ENCODE measurements at regions of chr2 and their contacts with region 1.

Region 1: DNA sequence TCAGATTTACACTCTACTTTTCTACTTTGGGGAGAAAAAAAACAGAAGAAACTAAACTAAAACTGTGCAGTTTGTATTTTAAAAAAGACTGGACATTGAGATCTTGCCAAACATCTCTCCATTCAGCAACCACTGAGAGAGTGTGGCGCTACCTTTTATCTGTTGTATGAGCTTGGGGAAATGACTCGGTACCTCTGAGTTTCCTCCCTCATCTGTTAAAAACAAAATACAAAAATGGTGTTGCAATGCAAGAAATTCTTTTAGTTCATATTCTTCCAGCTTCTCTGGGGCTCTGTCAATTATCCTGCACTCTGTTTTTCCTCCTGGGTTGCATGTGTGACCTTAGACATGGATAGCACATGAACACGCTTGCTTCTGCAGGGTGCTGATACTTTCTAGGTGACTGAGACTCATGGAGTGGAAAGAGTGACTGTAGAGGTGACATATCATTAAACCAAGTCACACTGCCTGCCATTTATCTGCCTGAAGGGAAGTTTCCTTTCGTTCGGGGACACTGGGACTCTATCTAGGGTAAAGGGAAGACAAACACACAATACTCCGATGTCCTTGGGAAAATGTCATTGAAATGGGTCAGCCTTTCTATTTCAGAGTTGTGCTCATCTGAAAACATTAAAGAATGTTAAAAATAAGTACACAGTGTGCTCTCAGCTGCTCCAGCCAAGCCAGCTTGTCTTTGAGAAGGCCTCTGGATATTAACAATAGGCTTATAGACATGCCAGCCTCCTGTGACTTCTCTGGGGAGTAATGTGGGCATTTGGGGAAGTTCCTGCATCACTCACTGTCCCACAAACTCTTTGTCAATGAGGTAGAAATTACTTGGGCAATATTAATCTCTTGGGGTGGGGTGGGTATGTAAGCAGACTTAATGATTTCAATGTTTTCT is 91.4 kb downstream of the TRIB2 start:
- DNase-seq: no peak
- H3K4me3 ChIP-seq: peak overlapping the region in 1 of 59 donors; percentile 8
- H3K27ac ChIP-seq: peak overlapping the region in 33 of 59 donors; percentile 1 to 63 (median 37)
- H3K27me3 ChIP-seq: no peaks in the 10 kb centered on the region
- CTCF ChIP-seq: no peak

Region 2: GRCh38 chr2:12769492-12770105 is 38.6 kb before region 1 on chr2:
- intact Hi-C with region 1: no loop called
- DNase-seq: peak in 8 of 10 donors; percentile 30 to 73 (median 68)
- H3K4me3 ChIP-seq: no peak overlapping the region
- H3K27ac ChIP-seq: no peak overlapping the region
- H3K27me3 ChIP-seq: peaks cover 0 to 13% (median 0%) of the 10 kb centered on the region in 45 donors
- CTCF ChIP-seq: no peak

Region 3: DNA sequence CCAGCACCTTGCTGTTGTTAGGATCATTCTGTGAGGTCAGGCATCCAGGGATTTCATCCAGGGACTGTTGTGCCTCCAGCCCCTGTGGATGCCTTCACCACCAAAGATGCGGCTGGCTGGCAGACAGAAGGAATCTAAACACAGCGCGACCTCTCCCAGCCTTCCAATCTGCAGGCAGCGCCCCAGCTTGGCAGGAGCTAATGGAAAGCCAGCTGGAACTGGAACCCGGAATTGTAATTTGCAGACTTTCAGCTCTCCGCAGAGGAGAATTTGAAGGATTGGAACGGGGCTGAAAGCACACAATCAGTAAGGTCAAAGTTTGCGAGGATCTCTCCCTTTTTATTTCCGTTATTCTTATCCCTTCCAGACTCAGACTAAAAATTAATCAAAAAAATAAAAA is 36.4 kb after region 1 on chr2:
- intact Hi-C with region 1: loop called in 1 of 2 experiments (anchors 5 kb)
- DNase-seq: no peak
- H3K4me3 ChIP-seq: peak overlapping the region in 3 of 59 donors; percentile 6 to 15 (median 12)
- H3K27ac ChIP-seq: peak overlapping the region in 1 of 59 donors; percentile 7
- H3K27me3 ChIP-seq: peaks cover 0 to 8% (median 0%) of the 10 kb centered on the region in 45 donors
- CTCF ChIP-seq: no peak

Region 4: DNA sequence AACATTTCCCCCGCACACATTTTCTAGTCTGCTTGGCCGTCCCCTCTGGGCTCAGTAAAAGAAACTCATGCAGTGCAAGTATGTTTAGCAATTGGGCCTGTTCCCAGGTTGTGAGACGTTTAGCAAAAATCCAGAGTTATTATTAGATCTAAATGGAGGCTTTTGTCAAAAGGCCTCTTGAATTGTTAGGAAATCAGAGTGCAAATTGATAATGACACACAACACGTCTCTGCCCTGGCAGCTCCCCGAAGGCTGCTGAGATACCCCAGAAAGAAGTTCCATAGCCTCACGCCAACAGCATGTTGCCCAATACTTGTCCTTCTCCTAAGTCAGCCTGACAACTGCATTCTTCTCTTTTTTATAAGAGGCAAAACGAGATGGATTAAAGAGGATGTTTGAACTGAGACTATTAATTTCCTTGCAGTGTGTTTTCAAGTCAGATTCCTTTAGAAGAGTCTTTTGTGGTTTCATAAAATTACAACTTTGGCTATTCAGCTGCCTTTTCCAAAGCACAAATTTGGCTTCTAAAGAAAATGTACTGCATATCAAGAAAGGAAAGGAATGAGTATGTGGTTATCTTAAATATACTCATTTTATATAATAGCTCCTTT is 110.8 kb after region 1 on chr2:
- intact Hi-C with region 1: no loop called
- DNase-seq: no peak
- H3K4me3 ChIP-seq: no peak overlapping the region
- H3K27ac ChIP-seq: peak overlapping the region in 21 of 59 donors; percentile 0 to 63 (median 32)
- H3K27me3 ChIP-seq: no peaks in the 10 kb centered on the region
- CTCF ChIP-seq: no peak

Region 5: DNA sequence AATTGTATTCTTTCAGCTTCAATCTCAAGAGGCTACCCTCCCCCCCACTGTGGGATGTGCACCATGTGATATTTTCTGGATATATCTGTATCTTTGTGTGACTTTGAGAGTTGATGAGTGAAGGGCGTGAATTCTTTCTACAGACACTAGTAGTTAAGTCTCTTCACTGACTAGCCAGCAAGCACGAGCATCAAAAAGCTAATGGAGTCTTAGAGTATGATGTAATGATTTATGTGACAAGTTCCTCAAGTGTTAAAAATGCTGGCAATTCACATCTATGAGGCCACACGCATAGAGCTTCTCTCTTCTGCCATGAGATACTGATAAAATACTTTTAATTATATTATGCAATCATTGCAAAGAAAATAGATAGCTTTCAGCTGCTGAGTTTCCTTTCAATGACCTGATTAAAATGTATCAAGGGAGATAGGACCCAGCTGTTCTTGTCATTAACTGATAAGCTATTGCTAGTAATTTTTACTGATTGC is 213.4 kb after region 1 on chr2:
- intact Hi-C with region 1: no loop called
- DNase-seq: no peak
- H3K4me3 ChIP-seq: no peak overlapping the region
- H3K27ac ChIP-seq: no peak overlapping the region
- H3K27me3 ChIP-seq: peaks cover 0 to 6% (median 0%) of the 10 kb centered on the region in 45 donors
- CTCF ChIP-seq: no peak